A549 (cell line): ENCODE measurements at regions of chr15 and their contacts with region 1.

Region 1: DNA sequence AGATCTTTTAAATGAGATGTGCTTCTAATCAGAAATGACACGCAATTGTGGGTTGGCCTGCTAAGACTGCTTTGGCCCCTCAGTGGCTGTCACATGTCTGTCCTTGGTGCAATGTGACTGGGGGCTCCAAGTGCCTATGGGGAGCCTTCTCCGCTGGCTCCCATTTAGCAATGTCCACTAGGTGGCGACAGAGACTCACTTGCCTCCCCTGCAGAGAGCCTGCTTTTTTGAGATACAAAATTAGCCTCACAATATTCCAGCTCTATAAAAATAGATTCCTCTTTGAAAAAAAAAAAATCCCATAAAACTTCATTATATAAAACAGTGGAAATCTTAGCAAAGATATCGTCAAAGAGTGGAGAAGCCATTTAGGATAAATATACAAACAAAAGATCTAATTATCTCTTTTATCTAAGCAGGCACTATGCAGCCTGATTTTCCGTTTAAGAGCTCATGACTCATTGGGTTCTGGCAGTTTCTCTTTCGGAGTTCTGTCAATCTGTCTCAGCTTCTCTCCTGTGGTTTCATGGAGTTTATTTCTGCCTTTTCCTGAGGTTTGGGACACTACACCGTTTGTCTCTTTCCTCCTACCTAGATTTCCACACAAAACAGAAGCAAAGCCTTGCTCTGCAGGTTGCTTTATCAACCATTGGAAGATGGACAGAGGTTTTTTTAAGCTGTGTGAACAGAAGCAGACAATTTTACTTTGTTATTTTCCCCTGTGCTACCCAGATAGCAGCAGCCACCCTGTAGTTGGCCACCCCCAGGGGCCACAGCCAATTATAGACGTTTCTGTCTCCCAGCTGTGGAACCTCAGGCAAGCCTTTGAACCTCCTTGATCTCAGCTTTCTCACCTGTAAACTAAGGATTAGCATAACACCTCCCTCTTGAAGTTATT is 68.4 kb upstream of the TNFAIP8L3 start:
- DNase-seq: peak; percentile 64 to 89
- ATAC-seq: peak; percentile 93 to 98
- H3K4me3 ChIP-seq: 0 out of 3 replicates have a peak overlapping the region, but pooled peaks have one; percentile 13
- H3K27ac ChIP-seq: no peak overlapping the region
- H3K4me1 ChIP-seq: no peaks in the 10 kb centered on the region
- CTCF ChIP-seq: peak; percentile 99
- EP300 ChIP-seq: no peak
- POLR2A ChIP-seq: no peak
- RAD21 ChIP-seq: peak; percentile 94

Region 2: GRCh38 chr15:51121118-51121517 is 42.0 kb before region 1 on chr15:
- CTCF ChIA-PET with region 1: interaction called, 13 read pairs
- POLR2A ChIA-PET with region 1: no interaction called
- DNase-seq: peak; percentile 71 to 85
- ATAC-seq: peak; percentile 99 to 100
- H3K4me3 ChIP-seq: no peak overlapping the region
- H3K27ac ChIP-seq: peak overlapping the region; percentile 58 to 66; a peak in 5 of 6 replicates
- H3K4me1 ChIP-seq: peaks cover 16% of the 10 kb centered on the region
- CTCF ChIP-seq: no peak
- EP300 ChIP-seq: no peak
- POLR2A ChIP-seq: no peak
- RAD21 ChIP-seq: no peak

Region 3: GRCh38 chr15:51192521-51193280 is 29.6 kb after region 1 on chr15:
- CTCF ChIA-PET with region 1: interaction called, 333 read pairs
- POLR2A ChIA-PET with region 1: no interaction called
- DNase-seq: peak; percentile 81 to 84
- ATAC-seq: peak; percentile 91 to 98
- H3K4me3 ChIP-seq: no peak overlapping the region
- H3K27ac ChIP-seq: no peak overlapping the region
- H3K4me1 ChIP-seq: no peaks in the 10 kb centered on the region
- CTCF ChIP-seq: peak; percentile 92
- EP300 ChIP-seq: no peak
- POLR2A ChIP-seq: no peak
- RAD21 ChIP-seq: peak; percentile 81 to 88

Region 4: DNA sequence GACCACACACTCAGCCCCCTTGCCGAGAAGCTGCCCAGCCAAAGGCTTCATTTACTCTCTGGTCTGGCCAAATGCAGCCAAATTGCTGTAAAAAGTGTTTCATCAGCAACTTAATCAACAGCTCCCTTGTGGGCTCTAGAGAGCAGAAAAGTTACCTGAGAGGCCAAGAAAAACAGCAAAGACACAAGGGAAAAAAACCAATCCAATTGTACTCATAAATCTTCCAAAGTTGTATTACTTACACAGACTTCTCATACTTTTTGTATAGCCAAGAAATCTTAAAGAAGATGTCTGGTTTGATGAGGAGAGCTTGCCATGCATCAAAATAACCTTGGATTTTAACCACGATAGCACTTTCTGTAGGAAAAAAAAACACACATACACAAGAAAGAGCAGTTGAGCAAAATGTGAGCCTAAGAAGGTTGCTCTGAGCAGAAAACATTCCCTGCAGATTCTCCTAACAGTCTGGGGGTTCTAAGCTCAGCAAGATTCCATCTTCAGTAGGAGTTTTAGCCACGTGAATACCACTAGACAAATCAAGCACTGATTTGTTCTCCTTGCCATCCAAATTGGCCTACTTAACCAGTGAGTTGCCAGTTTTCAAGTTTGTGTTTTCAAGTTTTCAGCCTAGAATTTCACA is 55.3 kb after region 1 on chr15:
- CTCF ChIA-PET with region 1: interaction called, 14 read pairs
- POLR2A ChIA-PET with region 1: no interaction called
- DNase-seq: no peak
- ATAC-seq: no peak
- H3K4me3 ChIP-seq: no peak overlapping the region
- H3K27ac ChIP-seq: no peak overlapping the region
- H3K4me1 ChIP-seq: no peaks in the 10 kb centered on the region
- CTCF ChIP-seq: no peak
- EP300 ChIP-seq: no peak
- POLR2A ChIP-seq: no peak
- RAD21 ChIP-seq: no peak

Region 5: DNA sequence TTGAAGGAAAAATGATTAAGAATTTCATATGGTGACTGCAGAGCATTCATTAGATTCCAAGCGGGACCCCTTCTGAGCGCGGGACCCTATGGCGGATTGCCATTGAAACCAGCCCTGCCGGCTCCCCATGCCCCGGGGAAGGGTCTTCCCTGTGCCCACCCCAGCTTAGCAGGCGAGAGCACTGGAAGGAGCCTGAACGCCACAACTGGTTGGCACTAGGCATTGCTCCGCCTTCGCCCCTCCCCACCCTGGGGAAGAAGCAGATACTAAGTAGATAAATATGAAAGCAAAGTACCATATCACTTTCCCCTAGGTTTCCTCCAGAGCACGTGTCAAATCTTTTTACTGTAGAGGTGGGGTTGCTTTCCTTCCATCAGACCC is 104.6 kb after region 1 on chr15:
- CTCF ChIA-PET with region 1: interaction called, 12 read pairs
- POLR2A ChIA-PET with region 1: no interaction called
- DNase-seq: peak in 1 of 2 experiments; percentile 62
- ATAC-seq: peak; percentile 61 to 82; a peak in 4 of 6 replicates
- H3K4me3 ChIP-seq: peak overlapping the region; percentile 44
- H3K27ac ChIP-seq: peak overlapping the region in 1 of 2 experiments; percentile 65; a peak in 3 of 6 replicates
- H3K4me1 ChIP-seq: peaks cover 6% of the 10 kb centered on the region; the same call in 2 of the 3 replicates
- CTCF ChIP-seq: no peak
- EP300 ChIP-seq: no peak
- POLR2A ChIP-seq: no peak
- RAD21 ChIP-seq: no peak

Region 6: GRCh38 chr15:51302156-51303040 is 139.3 kb after region 1 on chr15:
- CTCF ChIA-PET with region 1: no interaction called
- POLR2A ChIA-PET with region 1: no interaction called
- DNase-seq: no peak
- ATAC-seq: no peak; a peak in 1 of 6 replicates
- H3K4me3 ChIP-seq: no peak overlapping the region
- H3K27ac ChIP-seq: no peak overlapping the region
- H3K4me1 ChIP-seq: no peaks in the 10 kb centered on the region
- CTCF ChIP-seq: no peak
- EP300 ChIP-seq: no peak
- POLR2A ChIP-seq: no peak
- RAD21 ChIP-seq: no peak

Region 7: GRCh38 chr15:51380999-51381795 is 218.1 kb after region 1 on chr15:
- CTCF ChIA-PET with region 1: interaction called, 211 read pairs
- POLR2A ChIA-PET with region 1: interaction called, 5 read pairs
- DNase-seq: peak; percentile 72 to 78
- ATAC-seq: peak; percentile 90 to 97
- H3K4me3 ChIP-seq: no peak overlapping the region
- H3K27ac ChIP-seq: no peak overlapping the region
- H3K4me1 ChIP-seq: no peaks in the 10 kb centered on the region
- CTCF ChIP-seq: peak; percentile 96
- EP300 ChIP-seq: no peak
- POLR2A ChIP-seq: no peak
- RAD21 ChIP-seq: peak; percentile 97 to 99